Mammary epithelial cell (primary cell): ENCODE measurements at regions of chr1 and their contacts with region 1.

Region 1: GRCh38 chr1:239706245-239706892 is 320.0 kb downstream of the CHRM3 start:
- DNase-seq: no peak
- H3K4me3 ChIP-seq: no peak overlapping the region
- H3K27ac ChIP-seq: no peak overlapping the region
- H3K4me1 ChIP-seq: no peaks in the 10 kb centered on the region
- H3K27me3 ChIP-seq: no peaks in the 10 kb centered on the region
- CTCF ChIP-seq: no peak

Region 2: GRCh38 chr1:239662950-239663349 is 43.4 kb before region 1 on chr1:
- CTCF ChIA-PET with region 1: no interaction called
- dilution Hi-C with region 1: loop called (anchors 5 kb)
- in situ Hi-C with region 1: no loop called
- intact Hi-C with region 1: no loop called
- DNase-seq: no peak
- H3K4me3 ChIP-seq: no peak overlapping the region
- H3K27ac ChIP-seq: no peak overlapping the region
- H3K4me1 ChIP-seq: no peaks in the 10 kb centered on the region
- H3K27me3 ChIP-seq: no peaks in the 10 kb centered on the region
- CTCF ChIP-seq: no peak